ENCODE measurements at regions of chr7 and their contacts with region 1.

Region 1: DNA sequence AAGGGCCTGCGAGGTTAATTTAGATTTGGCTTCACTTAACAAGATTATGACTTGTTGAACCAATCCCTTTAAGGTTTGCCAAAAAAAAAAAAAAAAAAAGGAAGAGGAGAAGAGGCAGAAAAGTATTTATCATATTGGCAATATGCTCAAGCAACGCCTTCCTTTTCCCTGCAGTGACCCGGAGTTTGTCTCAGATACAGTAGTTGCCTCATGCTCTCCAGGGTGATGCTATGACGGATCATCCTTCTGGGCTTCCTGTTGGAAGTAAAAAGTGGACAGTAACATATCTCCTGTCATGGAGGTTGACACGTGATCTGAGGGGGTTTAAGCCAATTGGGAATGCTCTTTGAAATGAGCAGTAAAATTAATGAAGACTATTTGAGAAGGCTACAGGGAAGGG is 117.3 kb downstream of the BMPER start:
- DNase-seq: no peak
- H3K4me3 ChIP-seq: no peak overlapping the region
- H3K27ac ChIP-seq: no peak overlapping the region
- H3K4me1 ChIP-seq: no peaks in the 10 kb centered on the region
- H3K27me3 ChIP-seq: no peaks in the 10 kb centered on the region
- CTCF ChIP-seq: no peak
- POLR2A ChIP-seq: no peak

Region 2: GRCh38 chr7:33334349-33334748 is 688.3 kb before region 1 on chr7:
- intact Hi-C with region 1: no loop called
- DNase-seq: no peak
- H3K4me3 ChIP-seq: no peak overlapping the region
- H3K27ac ChIP-seq: no peak overlapping the region
- H3K4me1 ChIP-seq: no peaks in the 10 kb centered on the region
- H3K27me3 ChIP-seq: no peaks in the 10 kb centered on the region
- CTCF ChIP-seq: no peak
- POLR2A ChIP-seq: no peak

Region 3: GRCh38 chr7:33998476-33998875 is 24.1 kb before region 1 on chr7:
- intact Hi-C with region 1: loop called (anchors 2 kb)
- DNase-seq: no peak
- H3K4me3 ChIP-seq: no peak overlapping the region
- H3K27ac ChIP-seq: no peak overlapping the region
- H3K4me1 ChIP-seq: no peaks in the 10 kb centered on the region
- H3K27me3 ChIP-seq: no peaks in the 10 kb centered on the region
- CTCF ChIP-seq: no peak
- POLR2A ChIP-seq: no peak

Region 4: DNA sequence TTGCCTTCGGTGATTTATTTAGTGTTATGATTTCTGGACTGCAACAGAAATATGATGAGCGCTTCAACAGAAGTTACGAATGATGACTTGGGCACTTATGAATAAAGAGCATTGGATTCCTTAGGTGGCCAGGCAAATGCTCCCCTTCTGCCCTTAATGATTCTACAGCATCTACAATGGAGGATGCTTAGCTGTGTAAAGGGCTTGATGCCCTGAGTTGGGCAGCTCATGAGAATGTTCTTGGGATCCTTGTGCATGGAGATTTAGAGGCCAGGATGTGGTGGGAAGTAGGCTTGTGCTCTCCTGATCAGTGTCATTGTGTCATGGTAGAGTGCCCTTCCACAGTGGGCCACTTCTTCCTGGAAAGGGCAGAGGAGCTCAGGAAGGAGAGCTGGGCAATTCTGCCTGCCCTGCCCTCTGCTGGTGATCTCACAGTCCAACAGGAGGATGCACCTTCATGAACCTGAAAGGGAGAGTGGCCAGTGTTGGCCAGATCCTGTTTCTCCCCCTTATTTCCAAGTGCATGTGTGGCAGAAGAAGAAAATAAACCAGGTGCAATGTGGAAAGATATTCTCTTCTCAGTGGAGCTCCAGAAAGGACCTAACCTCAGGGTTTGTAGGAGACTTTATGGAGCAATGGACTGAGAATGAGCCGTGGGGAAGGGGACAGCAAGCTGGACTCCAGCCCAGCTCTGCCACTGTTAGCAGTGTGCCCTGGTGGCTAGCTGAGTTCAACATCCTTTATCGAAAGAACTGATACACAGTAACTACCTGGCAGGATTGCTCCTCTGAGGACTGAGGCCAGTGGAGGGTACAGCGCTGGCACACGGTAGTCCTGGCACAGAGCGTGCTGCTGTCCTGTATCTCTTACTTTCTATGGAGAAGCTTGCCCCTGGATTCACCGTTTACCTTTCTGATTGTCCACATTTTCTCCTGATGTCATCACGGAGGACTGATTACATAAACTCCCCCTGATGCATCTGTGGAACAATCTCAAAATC is 65.6 kb after region 1 on chr7:
- intact Hi-C with region 1: no loop called
- DNase-seq: no peak
- H3K4me3 ChIP-seq: no peak overlapping the region
- H3K27ac ChIP-seq: no peak overlapping the region
- H3K4me1 ChIP-seq: no peaks in the 10 kb centered on the region
- H3K27me3 ChIP-seq: no peaks in the 10 kb centered on the region
- CTCF ChIP-seq: no peak
- POLR2A ChIP-seq: no peak

Measured in breast epithelium (tissue), 4 donors.